ENCODE measurements at regions of chr10 and their contacts with region 1.

Region 1: DNA sequence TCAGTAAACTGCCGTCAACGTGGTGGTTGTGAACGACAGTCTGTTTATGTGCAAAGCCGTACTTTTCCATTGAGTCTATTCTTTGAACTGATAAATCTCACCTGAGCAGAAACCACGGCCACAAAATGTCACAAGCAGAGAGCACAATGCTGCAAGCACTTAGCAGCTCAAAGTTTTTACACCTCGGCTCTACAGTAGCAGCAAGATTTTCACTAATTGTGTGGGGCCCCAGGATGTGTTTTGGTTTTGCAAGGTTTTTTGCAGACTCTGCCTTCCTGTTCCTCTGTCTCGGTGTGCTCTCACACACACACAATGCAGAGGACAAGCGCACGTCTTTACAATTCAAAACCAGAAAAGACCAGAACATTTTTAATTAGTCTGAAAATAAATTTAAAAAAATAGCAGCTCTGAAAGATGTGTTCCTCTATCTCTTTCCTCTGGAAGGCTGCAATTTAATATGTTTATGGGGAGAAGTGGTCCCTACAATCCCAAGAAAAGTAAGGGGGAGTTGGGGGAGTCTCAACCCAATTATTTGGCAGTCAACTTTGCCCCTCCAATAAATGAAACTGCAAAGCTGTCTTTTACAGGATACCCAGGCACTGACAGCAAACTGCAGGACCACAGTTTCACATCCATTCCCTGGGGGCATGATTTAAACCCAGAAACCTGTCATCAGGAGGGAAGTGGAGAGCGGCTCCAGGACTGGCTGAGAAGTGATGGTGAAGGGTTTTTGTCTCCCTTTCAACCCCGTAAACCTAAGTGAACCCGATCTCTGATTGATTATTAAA is 73.8 kb upstream of the SFMBT2 start:
- DNase-seq: no peak
- ATAC-seq: peak; percentile 32
- H3K4me3 Mint-ChIP-seq: peak overlapping the region; percentile 76
- H3K27ac Mint-ChIP-seq: peak overlapping the region; percentile 53
- H3K4me1 Mint-ChIP-seq: peaks cover 64% of the 10 kb centered on the region
- H3K27me3 Mint-ChIP-seq: no peaks in the 10 kb centered on the region
- CTCF ChIP-seq: no peak

Region 2: DNA sequence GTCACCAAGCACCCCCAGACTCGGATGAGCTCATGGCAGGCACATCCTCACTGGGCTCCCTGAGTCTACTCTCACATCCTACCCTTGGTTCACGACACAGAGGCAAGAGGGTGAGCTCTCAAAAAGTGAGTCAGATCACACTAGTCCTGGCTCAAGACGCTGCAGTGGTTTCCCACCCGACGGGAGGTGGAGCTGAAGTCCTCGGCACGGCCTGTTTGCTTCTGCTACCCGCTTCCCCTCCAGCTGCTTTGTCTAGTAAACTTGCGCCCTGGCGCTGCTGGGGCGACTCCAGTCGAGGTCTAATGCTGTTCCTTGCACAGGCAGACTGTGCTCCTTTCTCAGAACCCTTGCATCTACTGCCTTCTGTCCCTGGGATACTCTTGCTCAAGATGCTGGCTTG is 60.3 kb before region 1 on chr10:
- CTCF ChIA-PET with region 1: no interaction called
- POLR2A ChIA-PET with region 1: no interaction called
- intact Hi-C with region 1: no loop called
- DNase-seq: no peak
- ATAC-seq: peak; percentile 54
- H3K4me3 Mint-ChIP-seq: no peak overlapping the region
- H3K27ac Mint-ChIP-seq: no peak overlapping the region
- H3K4me1 Mint-ChIP-seq: peaks cover 4% of the 10 kb centered on the region
- H3K27me3 Mint-ChIP-seq: no peaks in the 10 kb centered on the region
- CTCF ChIP-seq: no peak

Region 3: DNA sequence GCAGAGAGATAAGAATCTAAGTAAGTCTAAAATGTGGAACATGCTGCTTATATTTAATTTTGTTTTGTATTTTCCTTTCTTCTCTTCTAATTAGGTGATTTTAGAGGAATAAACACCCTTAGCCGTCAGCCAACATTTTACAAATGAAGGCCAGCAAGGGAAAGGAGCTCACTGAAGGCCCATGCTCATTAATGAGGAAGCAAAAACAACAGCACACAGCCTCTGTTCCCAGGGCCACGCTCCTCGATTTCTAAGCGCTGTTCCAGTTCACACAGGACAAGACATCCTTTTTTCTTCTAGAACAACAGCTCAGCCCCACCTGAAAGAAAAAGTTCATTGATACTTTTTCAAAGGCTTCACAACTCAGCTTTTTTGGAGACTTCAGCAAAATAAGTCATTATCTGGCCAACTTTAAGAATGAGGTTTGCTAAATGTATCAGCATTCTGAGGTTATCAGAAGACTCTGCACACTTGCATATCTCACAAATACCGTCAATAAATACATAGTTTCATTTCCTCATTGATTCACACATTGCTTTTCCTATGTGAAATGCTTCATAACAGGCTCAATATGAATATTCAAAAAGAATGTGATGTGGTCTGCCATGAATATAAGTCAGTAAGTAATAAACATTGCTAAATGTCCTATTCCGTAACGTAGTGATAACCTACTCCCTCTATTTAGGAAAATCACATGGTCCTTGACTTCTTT is 39.0 kb before region 1 on chr10:
- CTCF ChIA-PET with region 1: no interaction called
- POLR2A ChIA-PET with region 1: no interaction called
- intact Hi-C with region 1: loop called (anchors 5 kb)
- DNase-seq: no peak
- ATAC-seq: peak; percentile 68
- H3K4me3 Mint-ChIP-seq: peak overlapping the region; percentile 45
- H3K27ac Mint-ChIP-seq: peak overlapping the region; percentile 64
- H3K4me1 Mint-ChIP-seq: peaks cover 24% of the 10 kb centered on the region
- H3K27me3 Mint-ChIP-seq: no peaks in the 10 kb centered on the region
- CTCF ChIP-seq: no peak

Measured in activated B cell treated with CpG ODN at 0.5 μM for 24 hours (primary cell).